HEK293T (cell line): ENCODE measurements at regions of chr2 and their contacts with region 1.

Region 1: GRCh38 chr2:207529330-207530159 is at the start of gene CREB1:
- DNase-seq: peak; percentile 97

Region 2: GRCh38 chr2:207283356-207283755 is 246.2 kb before region 1 on chr2:
- CTCF ChIA-PET with region 1: no interaction called
- POLR2A ChIA-PET with region 1: no interaction called
- DNase-seq: no peak

Region 3: GRCh38 chr2:207503234-207503633 is 26.3 kb before region 1 on chr2:
- CTCF ChIA-PET with region 1: no interaction called
- POLR2A ChIA-PET with region 1: interaction called, 11 read pairs
- DNase-seq: no peak